Activated CD8-positive, alpha-beta T cell treated with anti-CD3 and anti-CD28 coated beads, Interleukin-2, amount 10 ng/mL, durations not matched to agents 7 days and 5 days (primary cell): ENCODE measurements at regions of chr7 and their contacts with region 1.

Region 1: DNA sequence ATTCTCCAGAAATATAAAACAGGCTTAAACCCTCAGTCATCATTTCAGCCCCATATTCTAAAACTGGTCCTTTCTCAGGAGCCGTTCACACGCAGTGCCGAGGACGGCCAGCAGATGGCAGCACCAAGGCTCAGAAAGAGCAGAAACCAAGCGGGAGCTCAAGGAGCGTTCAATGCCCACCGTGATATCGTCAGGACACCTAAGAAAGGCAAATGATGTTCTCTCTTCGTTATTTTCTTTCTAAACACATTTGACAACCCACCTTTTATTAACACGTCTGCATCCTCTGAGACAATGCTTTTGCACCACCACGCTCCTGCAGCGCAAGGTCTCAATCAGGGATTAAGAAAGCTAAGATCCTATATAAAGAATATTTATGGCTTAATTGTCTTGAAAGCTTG is 45.7 kb upstream of the RBM33 start:
- DNase-seq: peak; percentile 90
- ATAC-seq: peak; percentile 90
- H3K4me3 Mint-ChIP-seq: no peak overlapping the region
- H3K27ac Mint-ChIP-seq: no peak overlapping the region
- H3K4me1 Mint-ChIP-seq: peaks cover 7% of the 10 kb centered on the region
- H3K27me3 Mint-ChIP-seq: peaks cover 40% of the 10 kb centered on the region

Region 2: GRCh38 chr7:155612658-155613057 is 13.8 kb after region 1 on chr7:
- CTCF ChIA-PET with region 1: interaction called, 14 read pairs
- POLR2A ChIA-PET with region 1: no interaction called
- DNase-seq: no peak
- ATAC-seq: no peak
- H3K4me3 Mint-ChIP-seq: no peak overlapping the region
- H3K27ac Mint-ChIP-seq: no peak overlapping the region
- H3K4me1 Mint-ChIP-seq: no peaks in the 10 kb centered on the region
- H3K27me3 Mint-ChIP-seq: peaks cover 6% of the 10 kb centered on the region

Region 3: DNA sequence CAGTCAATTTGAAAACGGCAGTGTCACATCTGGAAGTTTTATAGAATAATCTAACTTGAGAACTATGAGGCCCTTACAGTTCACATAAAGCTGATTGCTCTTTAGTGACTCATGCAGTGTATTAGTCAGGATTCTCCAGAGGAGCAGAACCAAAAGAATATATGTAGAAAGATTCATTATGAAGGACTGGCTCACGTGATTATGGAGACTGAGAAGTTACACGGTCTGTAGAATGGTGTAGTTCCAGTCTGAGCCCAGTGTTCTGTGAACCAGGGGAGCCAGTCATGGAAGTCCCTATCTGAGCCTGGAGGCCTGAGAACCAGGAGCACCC is 67.1 kb after region 1 on chr7:
- CTCF ChIA-PET with region 1: interaction called, 17 read pairs
- POLR2A ChIA-PET with region 1: no interaction called
- DNase-seq: no peak
- ATAC-seq: no peak
- H3K4me3 Mint-ChIP-seq: no peak overlapping the region
- H3K27ac Mint-ChIP-seq: no peak overlapping the region
- H3K4me1 Mint-ChIP-seq: peaks cover 61% of the 10 kb centered on the region
- H3K27me3 Mint-ChIP-seq: no peaks in the 10 kb centered on the region

Region 4: GRCh38 chr7:155729834-155730233 is 131.0 kb after region 1 on chr7:
- CTCF ChIA-PET with region 1: interaction called, 22 read pairs
- POLR2A ChIA-PET with region 1: no interaction called
- DNase-seq: no peak
- ATAC-seq: no peak
- H3K4me3 Mint-ChIP-seq: no peak overlapping the region
- H3K27ac Mint-ChIP-seq: peak overlapping the region; percentile 3
- H3K4me1 Mint-ChIP-seq: peaks cover 43% of the 10 kb centered on the region
- H3K27me3 Mint-ChIP-seq: no peaks in the 10 kb centered on the region

Region 5: GRCh38 chr7:155753446-155753965 is 154.7 kb after region 1 on chr7:
- CTCF ChIA-PET with region 1: interaction called, 13 read pairs
- POLR2A ChIA-PET with region 1: no interaction called
- DNase-seq: no peak
- ATAC-seq: no peak
- H3K4me3 Mint-ChIP-seq: no peak overlapping the region
- H3K27ac Mint-ChIP-seq: peak overlapping the region; percentile 65
- H3K4me1 Mint-ChIP-seq: peaks cover 65% of the 10 kb centered on the region
- H3K27me3 Mint-ChIP-seq: no peaks in the 10 kb centered on the region

Region 6: DNA sequence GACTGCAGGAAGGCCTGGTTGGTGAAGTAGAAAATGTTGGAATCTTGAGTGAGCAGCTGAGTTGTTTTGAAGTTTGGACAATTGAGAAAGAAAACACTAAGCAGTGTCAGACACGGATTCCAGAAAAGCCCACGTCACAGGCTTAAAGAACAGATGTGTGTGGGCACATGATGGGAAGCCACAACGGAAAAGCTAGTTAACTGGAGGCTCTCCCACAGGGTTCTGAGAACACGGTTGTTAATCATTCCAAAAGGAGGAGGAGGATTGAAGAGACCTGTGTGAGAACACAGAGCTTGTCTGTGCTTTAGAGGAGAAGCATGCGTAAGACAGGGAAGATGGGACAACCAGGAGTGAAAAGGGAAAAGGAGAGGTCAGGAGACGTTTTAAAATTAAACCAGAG is 170.9 kb after region 1 on chr7:
- CTCF ChIA-PET with region 1: interaction called, 146 read pairs
- POLR2A ChIA-PET with region 1: no interaction called
- DNase-seq: no peak
- ATAC-seq: no peak
- H3K4me3 Mint-ChIP-seq: no peak overlapping the region
- H3K27ac Mint-ChIP-seq: no peak overlapping the region
- H3K4me1 Mint-ChIP-seq: peaks cover 29% of the 10 kb centered on the region
- H3K27me3 Mint-ChIP-seq: no peaks in the 10 kb centered on the region